Activated naive CD4-positive, alpha-beta T cell treated with anti-CD3 and anti-CD28 coated beads for 36 hours (primary cell): ENCODE measurements at regions of chr15 and their contacts with region 1.

Region 1: GRCh38 chr15:85073556-85074194 is 92.0 kb downstream of the PDE8A start:
- DNase-seq: peak; percentile 64
- H3K4me3 Mint-ChIP-seq: no peak overlapping the region
- H3K27ac Mint-ChIP-seq: peak overlapping the region; percentile 74
- H3K4me1 Mint-ChIP-seq: peaks cover 22% of the 10 kb centered on the region
- H3K27me3 Mint-ChIP-seq: no peaks in the 10 kb centered on the region

Region 2: DNA sequence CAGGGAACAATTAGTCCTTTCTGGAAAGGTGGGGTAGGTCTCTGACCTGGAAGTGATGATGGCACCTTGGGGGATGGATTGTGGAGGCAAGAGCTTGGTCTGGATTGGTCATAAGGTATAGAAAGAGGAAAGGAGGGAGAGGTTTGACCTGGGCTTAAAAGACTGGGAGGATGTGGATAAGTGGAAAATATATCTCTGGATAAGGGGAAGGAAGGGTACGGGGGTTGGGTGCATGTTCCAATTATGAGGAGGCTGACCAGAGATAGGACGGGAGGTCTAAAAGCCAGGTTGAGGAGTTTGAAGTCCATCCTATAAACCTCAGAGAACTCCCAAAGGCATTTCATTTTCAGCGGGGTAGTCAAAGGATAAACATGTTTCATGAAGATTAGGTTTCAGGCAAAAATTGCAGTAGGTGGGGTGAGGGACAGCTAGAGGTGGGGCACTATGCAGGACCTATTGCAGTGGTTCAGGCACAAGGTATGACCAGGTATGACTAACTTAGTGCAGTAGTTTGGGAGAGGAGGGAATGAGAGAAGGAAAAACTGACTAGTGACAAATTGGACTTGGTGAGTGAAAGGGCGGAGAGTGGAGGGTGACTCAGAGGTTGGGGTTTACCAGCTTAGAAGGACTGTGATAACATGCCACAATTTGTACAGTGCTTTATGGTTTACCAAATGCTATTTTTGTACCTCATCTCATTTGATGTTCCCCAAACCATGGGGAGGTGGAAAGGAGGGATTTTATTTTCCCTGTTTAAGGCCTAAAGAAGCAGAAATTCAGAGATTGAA is 81.3 kb before region 1 on chr15:
- CTCF ChIA-PET with region 1: interaction called, 3 read pairs
- intact Hi-C with region 1: loop called (anchors 1 kb)
- DNase-seq: peak; percentile 71
- H3K4me3 Mint-ChIP-seq: peak overlapping the region; percentile 1
- H3K27ac Mint-ChIP-seq: peak overlapping the region; percentile 68
- H3K4me1 Mint-ChIP-seq: peaks cover 62% of the 10 kb centered on the region
- H3K27me3 Mint-ChIP-seq: no peaks in the 10 kb centered on the region

Region 3: DNA sequence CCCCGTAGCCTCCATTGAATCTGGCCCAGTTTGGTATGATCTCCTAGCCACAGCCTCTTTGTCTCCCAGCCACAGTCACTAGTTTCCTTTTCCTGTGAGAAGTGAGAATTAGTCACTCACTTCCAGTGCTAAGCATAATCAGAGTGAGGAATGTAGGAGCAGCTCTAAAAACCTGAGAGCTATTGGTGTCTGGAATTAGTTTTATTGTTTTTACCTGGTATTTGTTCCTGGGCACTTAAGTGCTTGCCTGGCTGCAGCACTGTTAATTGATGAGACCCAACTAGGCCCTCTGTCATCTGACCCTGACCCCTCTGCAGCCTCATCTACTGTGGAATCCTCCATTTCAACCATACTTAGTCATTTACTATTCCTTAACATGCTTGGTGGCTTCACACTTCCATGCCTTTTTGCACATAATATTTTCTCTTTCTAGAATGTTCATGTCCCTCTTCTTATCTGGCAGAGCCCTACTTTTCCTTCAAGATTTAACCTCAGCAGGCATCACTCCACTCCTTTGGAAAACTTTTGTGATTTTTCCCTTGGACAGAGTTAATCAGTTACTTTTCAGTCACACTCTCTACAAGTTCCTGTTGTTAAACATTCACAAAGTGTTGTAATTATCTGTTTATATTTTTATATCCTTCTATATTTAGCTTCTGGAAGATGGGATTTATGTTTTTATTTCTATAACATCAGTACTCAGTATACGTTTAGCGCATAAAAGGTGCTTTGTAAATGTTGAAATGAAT is 43.2 kb before region 1 on chr15:
- CTCF ChIA-PET with region 1: interaction called, 3 read pairs
- intact Hi-C with region 1: loop called (anchors 2 kb)
- DNase-seq: peak; percentile 31
- H3K4me3 Mint-ChIP-seq: no peak overlapping the region
- H3K27ac Mint-ChIP-seq: no peak overlapping the region
- H3K4me1 Mint-ChIP-seq: peaks cover 51% of the 10 kb centered on the region
- H3K27me3 Mint-ChIP-seq: no peaks in the 10 kb centered on the region

Region 4: GRCh38 chr15:85063126-85064079 is 10.3 kb before region 1 on chr15:
- CTCF ChIA-PET with region 1: interaction called, 3 read pairs
- intact Hi-C with region 1: loop called (anchors 1 kb)
- DNase-seq: no peak
- H3K4me3 Mint-ChIP-seq: no peak overlapping the region
- H3K27ac Mint-ChIP-seq: no peak overlapping the region
- H3K4me1 Mint-ChIP-seq: peaks cover 34% of the 10 kb centered on the region
- H3K27me3 Mint-ChIP-seq: no peaks in the 10 kb centered on the region

Region 5: GRCh38 chr15:85154061-85154460 is 80.4 kb after region 1 on chr15:
- CTCF ChIA-PET with region 1: no interaction called
- intact Hi-C with region 1: loop called (anchors 5 kb)
- DNase-seq: no peak
- H3K4me3 Mint-ChIP-seq: no peak overlapping the region
- H3K27ac Mint-ChIP-seq: no peak overlapping the region
- H3K4me1 Mint-ChIP-seq: peaks cover 23% of the 10 kb centered on the region
- H3K27me3 Mint-ChIP-seq: no peaks in the 10 kb centered on the region